Sigmoid colon (tissue), 7 donors: ENCODE measurements at regions of chr5 and their contacts with region 1.

Region 1: GRCh38 chr5:168679515-168679920 is 100.3 kb upstream of the PANK3 start:
- DNase-seq: peak; percentile 83
- H3K4me3 ChIP-seq: no peak overlapping the region
- H3K27ac ChIP-seq: no peak overlapping the region
- H3K4me1 ChIP-seq: peaks cover 0 to 19% (median 4%) of the 10 kb centered on the region in 4 donors
- H3K27me3 ChIP-seq: no peaks in the 10 kb centered on the region
- CTCF ChIP-seq: peak; percentile 39 to 89 (median 74)
- EP300 ChIP-seq: no peak
- POLR2A ChIP-seq: no peak

Region 2: DNA sequence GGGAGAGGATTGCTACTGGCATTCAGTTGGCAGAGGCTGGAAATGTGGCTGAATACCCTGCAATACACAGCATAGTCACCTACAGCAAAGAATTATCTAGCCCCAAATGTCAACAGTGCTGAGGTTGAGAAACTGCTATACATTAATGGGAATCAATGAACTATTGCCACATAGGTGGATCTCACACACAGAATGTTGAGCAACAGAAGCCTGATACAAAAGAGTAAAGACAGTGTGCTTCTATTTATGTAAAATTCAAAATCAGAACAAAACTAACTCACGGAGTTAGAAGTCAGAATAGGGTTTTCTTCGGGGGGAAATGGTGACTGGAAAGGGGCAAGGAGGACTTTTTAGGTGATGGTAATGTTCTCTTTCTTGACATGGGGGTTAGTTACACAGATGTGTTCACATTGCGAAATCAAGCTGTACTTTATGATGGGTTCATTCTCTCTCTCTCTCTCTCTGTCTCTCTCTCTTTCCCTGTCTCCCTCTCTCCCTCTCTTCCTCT is 54.6 kb before region 1 on chr5:
- intact Hi-C with region 1: no loop called
- DNase-seq: no peak
- H3K4me3 ChIP-seq: no peak overlapping the region
- H3K27ac ChIP-seq: no peak overlapping the region
- H3K4me1 ChIP-seq: no peaks in the 10 kb centered on the region
- H3K27me3 ChIP-seq: peaks cover 0 to 3% (median 0%) of the 10 kb centered on the region in 3 donors
- CTCF ChIP-seq: no peak
- EP300 ChIP-seq: no peak
- POLR2A ChIP-seq: no peak

Region 3: GRCh38 chr5:168637793-168638192 is 41.7 kb before region 1 on chr5:
- intact Hi-C with region 1: no loop called
- DNase-seq: no peak
- H3K4me3 ChIP-seq: no peak overlapping the region
- H3K27ac ChIP-seq: no peak overlapping the region
- H3K4me1 ChIP-seq: no peaks in the 10 kb centered on the region
- H3K27me3 ChIP-seq: no peaks in the 10 kb centered on the region
- CTCF ChIP-seq: no peak
- EP300 ChIP-seq: no peak
- POLR2A ChIP-seq: no peak

Region 4: GRCh38 chr5:169548315-169548714 is 868.8 kb after region 1 on chr5:
- intact Hi-C with region 1: loop called (anchors 10 kb)
- DNase-seq: no peak
- H3K4me3 ChIP-seq: no peak overlapping the region
- H3K27ac ChIP-seq: no peak overlapping the region
- H3K4me1 ChIP-seq: no peaks in the 10 kb centered on the region
- H3K27me3 ChIP-seq: peaks cover 0 to 9% (median 0%) of the 10 kb centered on the region in 3 donors
- CTCF ChIP-seq: peak in 2 of 4 experiments; percentile 15 to 36
- EP300 ChIP-seq: no peak
- POLR2A ChIP-seq: no peak